CD8-positive, alpha-beta memory T cell (primary cell): ENCODE measurements at regions of chr1 and their contacts with region 1.

Region 1: GRCh38 chr1:206930210-206930798 is 8.6 kb upstream of the FCMR start:
- DNase-seq: peak in 4 of 5 donors; percentile 18 to 60 (median 38)
- H3K4me3 ChIP-seq: no peak overlapping the region
- H3K4me3 Mint-ChIP-seq: peak overlapping the region in 6 of 7 donors; percentile 17 to 76 (median 66)
- H3K27ac ChIP-seq: no peak overlapping the region
- H3K27ac Mint-ChIP-seq: peak overlapping the region; percentile 78 to 98 (median 92)
- H3K4me1 ChIP-seq: peaks cover 37% of the 10 kb centered on the region
- H3K4me1 Mint-ChIP-seq: peaks cover 43 to 56% (median 50%) of the 10 kb centered on the region in 3 donors
- H3K27me3 ChIP-seq: no peaks in the 10 kb centered on the region
- H3K27me3 Mint-ChIP-seq: peaks cover 0 to 2% of the 10 kb centered on the region in 2 donors

Region 2: DNA sequence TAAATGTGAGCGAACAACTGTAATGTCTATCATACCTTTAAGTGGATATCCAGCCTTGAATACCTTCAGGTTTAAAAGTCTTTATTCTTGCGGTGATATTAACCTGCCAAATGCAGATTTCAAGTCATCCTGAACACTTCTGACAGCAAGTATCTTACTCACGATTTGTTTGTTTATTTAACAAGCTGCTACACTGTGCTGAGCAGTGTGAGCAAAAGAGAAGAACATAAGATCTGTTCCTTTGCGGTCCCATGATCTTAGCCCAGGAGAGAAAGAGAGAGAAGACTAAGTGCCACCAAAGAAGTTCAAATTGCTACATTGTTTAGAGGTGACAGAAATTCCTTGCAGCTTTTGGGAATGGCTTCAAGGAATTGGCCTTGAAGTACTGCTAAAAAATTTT is 42.6 kb before region 1 on chr1:
- CTCF ChIA-PET with region 1: no interaction called
- POLR2A ChIA-PET with region 1: no interaction called
- DNase-seq: no peak
- H3K4me3 ChIP-seq: no peak overlapping the region
- H3K4me3 Mint-ChIP-seq: no peak overlapping the region
- H3K27ac ChIP-seq: no peak overlapping the region
- H3K27ac Mint-ChIP-seq: no peak overlapping the region
- H3K4me1 ChIP-seq: peaks cover 14% of the 10 kb centered on the region
- H3K4me1 Mint-ChIP-seq: peaks cover 3 to 12% (median 12%) of the 10 kb centered on the region in 3 donors
- H3K27me3 ChIP-seq: no peaks in the 10 kb centered on the region
- H3K27me3 Mint-ChIP-seq: peaks cover 5 to 8% of the 10 kb centered on the region in 2 donors

Region 3: GRCh38 chr1:206918076-206918475 is 12.2 kb before region 1 on chr1:
- CTCF ChIA-PET with region 1: interaction called, 138 read pairs
- POLR2A ChIA-PET with region 1: interaction called, 8 read pairs
- DNase-seq: no peak
- H3K4me3 ChIP-seq: peak overlapping the region; percentile 81
- H3K4me3 Mint-ChIP-seq: no peak overlapping the region
- H3K27ac ChIP-seq: no peak overlapping the region
- H3K27ac Mint-ChIP-seq: peak overlapping the region in 6 of 8 donors; percentile 79 to 96 (median 94)
- H3K4me1 ChIP-seq: peaks cover 70% of the 10 kb centered on the region
- H3K4me1 Mint-ChIP-seq: peaks cover 68 to 71% (median 70%) of the 10 kb centered on the region in 3 donors
- H3K27me3 ChIP-seq: no peaks in the 10 kb centered on the region
- H3K27me3 Mint-ChIP-seq: peaks cover 0 to 1% of the 10 kb centered on the region in 2 donors